Dorsolateral prefrontal cortex (tissue), 120 donors: ENCODE measurements at regions of chr17 and their contacts with region 1.

Region 1: GRCh38 chr17:1002771-1003555 is 6.0 kb downstream of the TIMM22 start:
- DNase-seq: peak in 4 of 10 donors; percentile 53 to 78 (median 66)
- H3K4me3 ChIP-seq: no peak overlapping the region
- H3K27ac ChIP-seq: peak overlapping the region; percentile 7 to 97 (median 80)
- H3K27me3 ChIP-seq: no peaks in the 10 kb centered on the region
- CTCF ChIP-seq: peak in 9 of 56 donors; percentile 10 to 33 (median 13)

Region 2: GRCh38 chr17:1055751-1056645 is 53.0 kb after region 1 on chr17:
- intact Hi-C with region 1: loop called (anchors 2 to 5 kb)
- DNase-seq: peak in 9 of 10 donors; percentile 61 to 81 (median 75)
- H3K4me3 ChIP-seq: no peak overlapping the region
- H3K27ac ChIP-seq: peak overlapping the region in 28 of 59 donors; percentile 1 to 69 (median 46)
- H3K27me3 ChIP-seq: peaks cover 0 to 4% (median 0%) of the 10 kb centered on the region in 45 donors
- CTCF ChIP-seq: peak; percentile 56 to 92 (median 85)